ENCODE measurements at regions of chr6 and their contacts with region 1.

Region 1: DNA sequence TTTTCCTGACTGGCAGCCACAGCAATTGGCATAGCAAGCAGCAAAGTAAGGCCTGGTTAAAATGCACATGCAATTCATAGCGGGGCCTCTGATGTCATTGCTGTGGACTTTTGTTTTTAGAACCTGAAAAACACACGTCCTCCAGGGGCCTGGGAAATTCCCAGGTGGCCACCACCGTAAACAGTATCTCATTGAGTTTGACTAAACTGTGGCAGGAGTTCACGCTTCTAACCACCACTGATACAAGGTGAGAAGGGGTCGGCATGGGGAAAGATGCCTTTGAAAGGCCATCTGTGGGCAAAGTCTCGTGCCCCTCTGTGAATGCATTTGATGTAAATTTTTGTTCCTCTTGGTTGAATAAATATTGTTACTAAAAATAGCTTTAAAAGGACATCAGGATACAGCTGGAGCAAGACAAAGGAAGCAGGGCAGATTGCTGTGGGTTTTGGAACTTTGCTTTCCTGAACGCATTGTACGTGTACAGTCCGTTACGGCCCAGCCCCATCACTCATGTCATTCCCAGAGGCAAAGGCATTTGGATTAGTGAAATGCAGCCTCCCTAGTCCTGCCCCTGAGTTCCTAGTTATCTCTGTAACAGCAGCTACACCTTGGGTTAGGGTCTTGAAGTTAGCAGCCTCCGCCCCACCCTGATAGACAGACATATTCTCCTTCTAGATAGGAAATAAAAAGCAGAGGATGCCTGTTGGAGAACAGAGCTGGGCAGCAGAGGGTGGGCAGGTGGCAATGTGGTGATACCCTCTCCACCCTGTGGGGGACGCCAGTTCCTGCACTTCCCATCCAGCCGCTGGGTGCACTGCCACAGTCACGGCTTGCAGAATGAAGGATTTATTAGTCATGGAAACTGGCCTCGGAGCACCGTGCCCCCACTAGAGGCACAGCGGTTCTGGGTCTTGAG is 80.3 kb downstream of the ZDHHC14 start:
- DNase-seq: peak; percentile 91
- H3K4me3 Mint-ChIP-seq: peak overlapping the region; percentile 48
- H3K27ac Mint-ChIP-seq: peak overlapping the region; percentile 97
- H3K4me1 Mint-ChIP-seq: peaks cover 64% of the 10 kb centered on the region
- H3K27me3 Mint-ChIP-seq: no peaks in the 10 kb centered on the region

Region 2: DNA sequence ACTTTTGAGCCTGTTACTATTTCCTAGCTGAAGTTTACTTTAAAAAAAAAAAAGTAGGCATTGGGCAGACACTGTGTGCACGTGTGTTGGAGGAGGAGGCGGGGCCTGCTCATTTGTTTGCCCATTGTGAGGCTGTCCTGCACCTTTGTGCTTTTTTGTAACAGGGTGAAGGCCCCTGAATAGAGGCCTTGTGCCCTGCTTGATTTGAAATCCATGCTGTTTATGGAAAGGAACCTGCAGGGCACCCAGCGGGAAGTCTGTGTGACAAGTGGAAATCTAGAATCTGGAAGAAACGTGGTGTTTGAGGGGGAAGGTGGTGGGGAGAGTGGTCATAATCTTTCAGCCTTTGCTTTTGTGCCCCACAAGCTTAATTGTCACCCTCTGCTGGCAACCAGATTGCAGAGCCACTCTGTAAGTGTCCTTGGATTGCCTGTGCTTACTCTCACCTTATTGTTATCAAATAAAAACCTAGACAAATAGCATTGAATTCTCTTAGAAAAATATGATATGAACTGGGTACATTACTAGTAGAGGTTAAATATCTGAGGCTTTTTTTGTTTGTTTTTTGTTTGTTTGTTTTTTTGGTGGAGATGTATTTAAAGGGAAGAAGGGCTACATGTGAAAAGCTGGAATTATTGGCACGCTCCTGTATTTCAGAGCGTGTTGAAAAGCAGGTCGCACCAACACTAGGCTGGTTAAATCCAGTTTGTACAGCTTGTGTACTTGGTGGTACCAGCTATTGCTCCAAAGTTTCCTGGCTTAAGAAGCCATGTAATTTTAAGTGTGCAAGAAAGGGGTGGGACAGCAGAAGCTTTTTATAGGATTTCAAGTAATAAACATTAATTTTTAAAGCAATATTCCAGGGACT is 527.8 kb before region 1 on chr6:
- intact Hi-C with region 1: no loop called
- DNase-seq: no peak
- H3K4me3 Mint-ChIP-seq: no peak overlapping the region
- H3K27ac Mint-ChIP-seq: no peak overlapping the region
- H3K4me1 Mint-ChIP-seq: peaks cover 27% of the 10 kb centered on the region
- H3K27me3 Mint-ChIP-seq: no peaks in the 10 kb centered on the region

Region 3: DNA sequence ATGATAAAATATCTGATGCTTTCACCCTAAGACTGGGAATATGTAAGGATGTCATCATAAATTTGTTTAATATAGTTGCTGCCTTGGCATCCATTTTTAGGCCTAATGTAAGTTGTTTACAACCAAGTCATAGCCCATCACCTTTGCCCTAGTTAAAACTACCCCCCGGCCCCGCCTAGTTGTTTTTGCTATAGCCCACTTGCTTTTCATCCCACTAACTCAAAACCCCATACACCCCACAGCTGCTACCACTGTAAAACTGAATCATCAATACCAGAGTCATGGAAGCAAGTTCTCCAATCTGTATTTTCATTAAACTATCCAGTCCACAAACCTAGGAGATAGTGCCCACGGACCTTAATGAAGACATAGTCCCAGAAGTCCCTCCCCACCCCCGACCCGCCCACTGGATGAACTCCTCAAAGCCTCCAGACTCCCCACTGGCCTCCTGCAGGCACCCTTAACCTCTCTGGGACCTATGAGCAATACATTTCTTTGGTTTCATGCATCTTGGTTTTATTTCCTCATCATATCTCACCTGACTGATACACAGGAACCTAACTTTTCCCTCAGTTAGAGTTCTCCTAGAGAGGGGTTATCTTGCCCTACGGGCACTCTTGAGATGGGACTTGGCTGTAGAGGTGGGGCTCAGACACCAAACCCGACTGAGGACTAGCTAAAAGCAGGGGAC is 92.8 kb before region 1 on chr6:
- intact Hi-C with region 1: loop called (anchors 2 kb)
- DNase-seq: no peak
- H3K4me3 Mint-ChIP-seq: no peak overlapping the region
- H3K27ac Mint-ChIP-seq: no peak overlapping the region
- H3K4me1 Mint-ChIP-seq: peaks cover 16% of the 10 kb centered on the region
- H3K27me3 Mint-ChIP-seq: peaks cover 59% of the 10 kb centered on the region

Region 4: GRCh38 chr6:157428427-157429202 is 32.6 kb before region 1 on chr6:
- intact Hi-C with region 1: loop called (anchors 1 kb)
- DNase-seq: peak; percentile 70
- H3K4me3 Mint-ChIP-seq: peak overlapping the region; percentile 55
- H3K27ac Mint-ChIP-seq: peak overlapping the region; percentile 88
- H3K4me1 Mint-ChIP-seq: peaks cover 43% of the 10 kb centered on the region
- H3K27me3 Mint-ChIP-seq: no peaks in the 10 kb centered on the region

Region 5: DNA sequence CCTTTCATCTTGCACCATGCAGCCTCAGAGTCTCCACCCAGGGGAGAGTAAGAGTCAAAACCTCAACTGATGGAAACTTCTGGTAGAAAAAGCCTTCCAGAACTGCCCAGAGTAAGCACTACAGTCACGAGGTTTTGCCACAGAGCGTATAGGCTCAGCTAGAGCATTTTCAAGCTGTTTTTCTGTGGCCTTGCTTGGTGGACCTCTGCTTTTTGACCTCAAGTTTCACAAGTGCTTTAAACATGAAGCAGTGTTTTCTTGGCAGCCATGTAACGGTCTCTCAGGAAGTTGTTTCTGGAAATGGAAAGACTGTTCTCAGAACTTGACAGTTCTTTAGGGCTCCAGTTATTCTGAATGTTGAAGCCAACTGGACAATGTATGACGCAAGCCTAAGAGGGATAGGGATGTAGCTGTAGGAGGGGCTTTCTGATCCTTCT is 66.2 kb after region 1 on chr6:
- intact Hi-C with region 1: loop called (anchors 2 kb)
- DNase-seq: peak; percentile 88
- H3K4me3 Mint-ChIP-seq: peak overlapping the region; percentile 43
- H3K27ac Mint-ChIP-seq: peak overlapping the region; percentile 77
- H3K4me1 Mint-ChIP-seq: peaks cover 38% of the 10 kb centered on the region
- H3K27me3 Mint-ChIP-seq: no peaks in the 10 kb centered on the region

Region 6: GRCh38 chr6:157563611-157564284 is 102.5 kb after region 1 on chr6:
- intact Hi-C with region 1: loop called (anchors 2 kb)
- DNase-seq: peak; percentile 78
- H3K4me3 Mint-ChIP-seq: peak overlapping the region; percentile 35
- H3K27ac Mint-ChIP-seq: no peak overlapping the region
- H3K4me1 Mint-ChIP-seq: peaks cover 34% of the 10 kb centered on the region
- H3K27me3 Mint-ChIP-seq: peaks cover 7% of the 10 kb centered on the region

Region 7: DNA sequence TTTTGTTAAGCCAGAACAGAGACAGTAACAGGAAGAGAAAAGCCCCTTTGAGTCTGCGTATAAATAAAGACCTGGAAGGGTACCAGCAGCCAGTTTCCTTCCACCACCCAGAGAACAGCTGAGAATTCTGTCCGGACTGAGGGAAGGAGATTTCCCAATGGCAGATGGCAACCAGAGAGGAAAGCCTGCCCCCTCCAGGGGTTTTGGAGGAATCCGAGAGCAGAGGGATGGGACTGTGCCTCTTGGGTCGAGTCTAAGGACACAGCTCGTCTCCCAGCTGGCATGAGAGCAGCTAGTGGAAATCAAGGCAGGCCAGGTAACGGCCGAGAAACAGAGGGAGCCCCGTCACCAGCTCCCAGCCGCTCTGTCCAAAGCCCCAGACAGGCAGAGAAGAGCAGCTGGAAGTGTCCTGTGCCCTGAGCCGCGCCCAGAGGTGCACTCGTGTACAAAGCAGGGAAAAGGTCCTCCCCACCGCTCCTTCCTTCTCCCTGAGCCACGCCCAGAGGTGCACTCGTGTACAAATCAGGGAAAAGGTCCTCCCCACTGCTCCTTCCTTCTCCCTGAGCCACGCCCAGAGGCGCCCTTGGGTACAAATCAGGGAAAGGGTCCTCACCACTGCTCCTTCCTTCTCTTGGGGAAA is 227.8 kb after region 1 on chr6:
- intact Hi-C with region 1: no loop called
- DNase-seq: no peak
- H3K4me3 Mint-ChIP-seq: no peak overlapping the region
- H3K27ac Mint-ChIP-seq: no peak overlapping the region
- H3K4me1 Mint-ChIP-seq: no peaks in the 10 kb centered on the region
- H3K27me3 Mint-ChIP-seq: peaks cover 11% of the 10 kb centered on the region

Region 8: DNA sequence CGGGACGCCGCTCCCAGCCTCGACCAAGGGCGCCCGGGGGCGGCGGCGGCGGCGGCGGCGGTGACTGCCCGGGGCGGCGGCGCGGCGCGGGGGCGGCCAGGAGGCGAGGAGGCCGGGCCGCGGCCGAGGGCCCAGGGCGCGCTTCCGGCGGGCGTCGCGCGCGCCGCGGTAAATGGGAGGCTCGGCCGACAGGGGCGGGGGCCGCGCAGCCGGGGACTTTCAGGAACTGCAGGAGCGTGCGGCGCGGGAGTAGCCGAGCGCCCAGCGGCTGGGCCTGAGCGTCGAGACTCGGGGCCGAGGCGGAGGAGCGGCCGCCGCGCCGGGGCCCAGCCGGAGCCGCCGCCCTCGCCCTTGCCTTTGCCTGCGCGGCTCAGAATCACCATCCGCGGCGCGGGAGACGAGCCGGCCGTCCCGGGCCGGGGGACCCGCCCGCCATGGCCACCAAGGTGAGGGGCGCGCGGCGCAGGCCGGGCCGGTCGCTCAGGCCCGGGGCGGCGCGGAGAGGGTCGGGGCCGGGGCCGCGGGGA is 361.8 kb after region 1 on chr6 and contains the start of gene SNX9:
- intact Hi-C with region 1: loop called (anchors 1 kb)
- DNase-seq: peak; percentile 89
- H3K4me3 Mint-ChIP-seq: peak within 1 kb of the TSS; percentile 95
- H3K27ac Mint-ChIP-seq: peak within 1 kb of the TSS; percentile 99
- H3K4me1 Mint-ChIP-seq: peaks cover 34% of the 10 kb centered on the region
- H3K27me3 Mint-ChIP-seq: peaks cover 34% of the 10 kb centered on the region
- total RNA-seq, gene SNX9: 33.7 and 34.0 TPM in 2 replicates

Region 9: GRCh38 chr6:158649289-158650143 is 1188.3 kb after region 1 on chr6 and contains the start of gene SYTL3:
- intact Hi-C with region 1: loop called (anchors 5 kb)
- DNase-seq: peak; percentile 95
- H3K4me3 Mint-ChIP-seq: peak within 1 kb of the TSS; percentile 91
- H3K27ac Mint-ChIP-seq: peak within 1 kb of the TSS; percentile 94
- H3K4me1 Mint-ChIP-seq: peaks cover 77% of the 10 kb centered on the region
- H3K27me3 Mint-ChIP-seq: no peaks in the 10 kb centered on the region
- total RNA-seq, gene SYTL3: 102 and 106 TPM in 2 replicates

Measured in activated CD4-positive, alpha-beta T cell treated with anti-CD3 and anti-CD28 coated beads, Interleukin-2, amount 10 ng/mL, durations not matched to agents 24 days and 14 days (primary cell).